ENCODE measurements at regions of chr3 and their contacts with region 1.

Region 1: DNA sequence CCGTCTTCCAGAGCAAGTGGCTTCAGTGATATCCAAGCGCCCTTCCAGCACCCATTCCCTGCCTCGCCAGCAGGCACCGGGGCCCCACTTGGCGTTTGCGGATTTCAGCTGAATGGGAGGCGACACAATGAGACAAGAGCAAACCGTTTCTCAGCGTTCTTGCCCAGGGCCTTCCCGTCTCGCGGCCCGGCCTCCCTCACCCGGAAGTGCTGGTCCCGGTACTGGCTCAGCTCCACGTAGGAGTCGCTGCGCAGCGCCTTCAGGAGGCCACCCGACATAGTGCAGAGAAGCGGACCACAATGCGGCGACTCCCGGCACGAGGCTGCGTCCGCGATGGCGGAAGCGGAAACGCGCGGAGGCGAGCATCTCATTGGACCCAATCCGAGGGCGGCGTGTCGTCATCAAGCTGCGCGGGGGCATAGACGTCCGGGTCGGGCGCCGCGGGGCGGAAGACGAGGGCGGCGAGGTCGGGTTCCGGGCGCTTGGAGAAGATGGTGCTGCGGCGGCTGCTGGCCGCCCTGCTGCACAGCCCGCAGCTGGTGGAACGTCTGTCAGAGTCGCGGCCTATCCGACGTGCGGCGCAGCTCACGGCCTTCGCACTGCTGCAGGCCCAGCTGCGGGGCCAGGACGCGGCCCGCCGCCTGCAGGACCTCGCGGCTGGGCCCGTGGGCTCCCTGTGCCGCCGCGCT is at the start of gene NCBP2:
- DNase-seq: peak; percentile 99
- H3K4me3 ChIP-seq: peak within 1 kb of the TSS; percentile 98 to 99
- H3K4me3 Mint-ChIP-seq: peak within 1 kb of the TSS; percentile 94 to 97 (median 96)
- H3K27ac ChIP-seq: peak within 1 kb of the TSS; percentile 93
- H3K27ac Mint-ChIP-seq: peak within 1 kb of the TSS; percentile 97 to 99 (median 98)
- H3K4me1 ChIP-seq: peaks cover 29% of the 10 kb centered on the region
- H3K4me1 Mint-ChIP-seq: peaks cover 15 to 61% (median 44%) of the 10 kb centered on the region in 4 donors
- H3K27me3 ChIP-seq: no peaks in the 10 kb centered on the region
- H3K27me3 Mint-ChIP-seq: no peaks in the 10 kb centered on the region
- total RNA-seq, gene NCBP2: 71.4 to 73.7 TPM

Region 2: GRCh38 chr3:196711838-196712513 is 230.4 kb before region 1 on chr3 and contains the starts of genes CEP19 and PIGX:
- CTCF ChIA-PET with region 1: no interaction called
- POLR2A ChIA-PET with region 1: interaction called, 11 read pairs
- intact Hi-C with region 1: loop called (anchors 1 kb)
- DNase-seq: peak; percentile 93 to 98 (median 96)
- H3K4me3 ChIP-seq: peak within 1 kb of the TSS; percentile 68 to 87
- H3K4me3 Mint-ChIP-seq: peak within 1 kb of the TSS; percentile 85 to 98 (median 96)
- H3K27ac ChIP-seq: peak within 1 kb of the TSS; percentile 99
- H3K27ac Mint-ChIP-seq: peak within 1 kb of the TSS; percentile 93 to 100 (median 99)
- H3K4me1 ChIP-seq: peaks cover 21% of the 10 kb centered on the region
- H3K4me1 Mint-ChIP-seq: peaks cover 12 to 33% (median 24%) of the 10 kb centered on the region in 4 donors
- H3K27me3 ChIP-seq: no peaks in the 10 kb centered on the region
- H3K27me3 Mint-ChIP-seq: no peaks in the 10 kb centered on the region
- total RNA-seq, gene CEP19: 7.8 to 8.2 TPM
- total RNA-seq, gene PIGX: 19.1 to 23.7 TPM

Region 3: DNA sequence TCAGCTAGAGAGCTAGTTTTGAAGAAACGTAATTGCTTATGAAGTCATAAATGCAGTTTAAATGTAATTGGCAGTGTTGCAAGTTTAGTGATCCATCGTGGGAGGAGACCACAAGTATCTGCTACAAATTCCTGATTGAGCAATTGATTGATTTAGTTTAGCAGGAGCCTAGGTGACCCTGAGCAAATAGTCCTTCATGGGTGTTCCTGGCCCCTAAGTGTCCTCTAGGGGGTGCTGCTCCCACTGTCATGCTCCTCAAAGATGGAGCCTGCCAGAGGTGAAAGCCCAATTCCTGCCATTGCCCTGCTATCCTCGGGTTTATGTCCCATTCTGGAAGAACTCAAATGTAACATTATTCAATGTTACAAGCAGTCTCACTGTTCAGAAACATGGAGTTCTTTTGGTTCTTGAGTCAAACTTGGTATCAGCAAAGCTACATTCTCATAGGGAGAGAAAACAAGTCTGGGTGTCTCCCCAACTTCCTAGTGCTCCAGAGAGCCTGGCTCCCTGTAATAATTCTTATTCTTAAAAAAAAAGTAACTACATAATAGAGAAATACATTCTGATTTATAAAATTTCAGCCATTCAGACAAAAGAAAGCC is 104.5 kb before region 1 on chr3:
- CTCF ChIA-PET with region 1: interaction called, 5 read pairs
- POLR2A ChIA-PET with region 1: interaction called, 3 read pairs
- intact Hi-C with region 1: loop called (anchors 1 kb)
- DNase-seq: peak; percentile 67 to 73 (median 70)
- H3K4me3 ChIP-seq: no peak overlapping the region
- H3K4me3 Mint-ChIP-seq: no peak overlapping the region
- H3K27ac ChIP-seq: no peak overlapping the region
- H3K27ac Mint-ChIP-seq: peak overlapping the region in 2 of 7 donors; percentile 22 to 27
- H3K4me1 ChIP-seq: no peaks in the 10 kb centered on the region
- H3K4me1 Mint-ChIP-seq: no peaks in the 10 kb centered on the region
- H3K27me3 ChIP-seq: no peaks in the 10 kb centered on the region
- H3K27me3 Mint-ChIP-seq: peaks cover 0 to 1% of the 10 kb centered on the region in 2 donors

Region 4: GRCh38 chr3:196931157-196931556 is 11.2 kb before region 1 on chr3:
- CTCF ChIA-PET with region 1: no interaction called
- POLR2A ChIA-PET with region 1: interaction called, 10 read pairs
- intact Hi-C with region 1: no loop called
- DNase-seq: no peak
- H3K4me3 ChIP-seq: no peak overlapping the region
- H3K4me3 Mint-ChIP-seq: no peak overlapping the region
- H3K27ac ChIP-seq: no peak overlapping the region
- H3K27ac Mint-ChIP-seq: peak overlapping the region in 1 of 7 donors; percentile 50
- H3K4me1 ChIP-seq: no peaks in the 10 kb centered on the region
- H3K4me1 Mint-ChIP-seq: no peaks in the 10 kb centered on the region
- H3K27me3 ChIP-seq: no peaks in the 10 kb centered on the region
- H3K27me3 Mint-ChIP-seq: no peaks in the 10 kb centered on the region

Region 5: GRCh38 chr3:197002701-197003454 is 60.5 kb after region 1 on chr3:
- CTCF ChIA-PET with region 1: no interaction called
- POLR2A ChIA-PET with region 1: no interaction called
- intact Hi-C with region 1: loop called (anchors 2 kb)
- DNase-seq: peak; percentile 77 to 86 (median 80)
- H3K4me3 ChIP-seq: no peak overlapping the region
- H3K4me3 Mint-ChIP-seq: no peak overlapping the region
- H3K27ac ChIP-seq: peak overlapping the region; percentile 47
- H3K27ac Mint-ChIP-seq: no peak overlapping the region
- H3K4me1 ChIP-seq: peaks cover 9% of the 10 kb centered on the region
- H3K4me1 Mint-ChIP-seq: peaks cover 5 to 17% (median 8%) of the 10 kb centered on the region in 4 donors
- H3K27me3 ChIP-seq: no peaks in the 10 kb centered on the region
- H3K27me3 Mint-ChIP-seq: no peaks in the 10 kb centered on the region